Left cardiac atrium (tissue), 4 donors: ENCODE measurements at regions of chr1 and their contacts with region 1.

Region 1: DNA sequence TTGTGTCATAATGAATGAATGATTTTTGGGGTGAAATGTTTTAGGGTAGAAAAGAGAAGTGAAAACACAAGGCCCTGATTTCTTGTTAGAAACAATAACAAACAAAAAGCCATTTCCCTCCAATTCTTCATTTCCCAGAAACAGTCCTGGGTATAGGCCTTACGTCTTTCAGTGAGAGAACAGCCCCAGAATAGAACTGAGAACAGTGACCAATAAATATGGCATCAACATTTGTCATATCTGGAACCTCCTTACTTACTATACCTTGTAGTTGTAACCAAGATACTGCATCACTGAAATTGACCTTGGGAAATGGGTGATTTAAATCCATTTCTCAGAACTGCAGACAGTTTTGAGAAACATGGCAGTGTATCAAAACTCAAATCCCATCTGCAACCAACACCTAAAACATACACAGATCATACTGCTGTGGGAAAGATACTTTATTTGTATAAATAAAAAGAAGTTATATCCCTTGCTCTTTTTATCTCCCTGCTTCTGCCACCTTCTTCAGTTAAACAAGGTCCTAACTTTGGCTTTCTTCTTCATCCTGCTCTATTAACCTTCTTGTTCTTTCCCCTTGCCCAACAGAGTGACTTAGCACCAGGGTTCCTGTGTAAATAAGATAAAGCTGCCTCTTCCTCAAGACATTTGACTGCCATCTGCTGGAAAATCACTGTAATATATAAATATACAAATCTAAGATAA is 19.5 kb downstream of the XKR8 start:
- DNase-seq: no peak
- ATAC-seq: peak; percentile 78 to 81

Region 2: GRCh38 chr1:27862651-27863537 is 116.4 kb before region 1 on chr1:
- intact Hi-C with region 1: loop called (anchors 5 to 10 kb)
- DNase-seq: peak; percentile 70
- ATAC-seq: peak; percentile 90 to 93

Region 3: GRCh38 chr1:28127617-28128257 is 148.4 kb after region 1 on chr1:
- intact Hi-C with region 1: no loop called
- DNase-seq: no peak
- ATAC-seq: no peak